ENCODE measurements at regions of chr17 and their contacts with region 1.

Region 1: DNA sequence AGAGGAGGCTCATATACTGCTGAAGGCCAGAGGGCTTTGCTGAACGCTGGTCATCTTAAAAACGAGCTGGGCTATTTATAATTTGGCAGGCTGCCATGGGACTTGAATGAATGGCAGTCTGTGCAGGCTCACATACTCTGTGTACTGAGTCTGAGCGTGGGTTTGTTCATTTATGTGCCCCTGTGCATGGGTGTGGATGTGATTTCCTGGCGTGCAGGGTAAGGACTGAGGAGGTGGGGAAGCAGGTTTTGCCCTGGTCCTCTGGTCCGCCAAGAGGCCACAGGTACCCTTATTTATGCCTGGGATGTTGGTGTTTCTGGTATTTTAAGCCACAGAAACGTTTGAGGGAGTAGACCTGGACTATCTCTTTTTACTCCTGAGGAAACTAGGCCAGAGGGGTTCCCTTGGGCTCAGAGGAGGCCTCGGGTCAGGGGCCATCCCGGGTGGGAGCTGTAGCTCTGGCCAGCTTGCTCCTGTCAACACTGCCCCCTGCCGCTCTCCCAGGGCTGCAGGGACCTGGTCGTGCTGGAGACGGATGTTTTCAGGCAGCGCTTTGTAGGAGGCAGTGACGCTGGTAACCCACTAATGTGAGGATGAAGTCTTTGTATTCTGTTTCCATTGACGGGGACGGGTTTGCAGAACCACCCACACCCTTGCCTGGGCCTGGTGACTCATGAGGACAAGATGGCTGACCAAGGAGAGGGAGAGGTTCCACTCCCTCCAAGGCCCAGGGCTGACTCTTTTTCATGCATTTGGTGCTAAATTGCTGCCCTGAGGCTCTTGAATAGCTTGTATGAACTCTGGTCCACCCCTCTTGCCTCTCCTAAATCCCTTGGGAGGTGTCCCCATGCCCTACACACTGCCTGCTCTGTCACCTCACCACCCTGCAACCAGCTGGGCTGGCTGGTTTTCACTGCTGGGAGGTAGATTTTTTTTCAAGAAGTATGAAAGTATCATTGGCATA is 184.5 kb downstream of the MSI2 start:
- DNase-seq: peak; percentile 93
- ATAC-seq: peak; percentile 86
- H3K4me3 Mint-ChIP-seq: peak overlapping the region; percentile 38
- H3K27ac Mint-ChIP-seq: peak overlapping the region; percentile 95
- H3K4me1 Mint-ChIP-seq: peaks cover 85% of the 10 kb centered on the region
- H3K27me3 Mint-ChIP-seq: no peaks in the 10 kb centered on the region

Region 2: GRCh38 chr17:56977673-56978395 is 463.0 kb before region 1 on chr17 and contains the start of gene SCPEP1:
- CTCF ChIA-PET with region 1: no interaction called
- POLR2A ChIA-PET with region 1: no interaction called
- intact Hi-C with region 1: no loop called
- DNase-seq: peak; percentile 90
- ATAC-seq: peak; percentile 96
- H3K4me3 Mint-ChIP-seq: peak within 1 kb of the TSS; percentile 83
- H3K27ac Mint-ChIP-seq: peak within 1 kb of the TSS; percentile 74
- H3K4me1 Mint-ChIP-seq: peaks cover 18% of the 10 kb centered on the region
- H3K27me3 Mint-ChIP-seq: peaks cover 3% of the 10 kb centered on the region
- total RNA-seq, gene SCPEP1: 9.7 to 14.8 TPM

Region 3: GRCh38 chr17:57084802-57085447 is 355.9 kb before region 1 on chr17 and contains the start of gene AKAP1:
- CTCF ChIA-PET with region 1: no interaction called
- POLR2A ChIA-PET with region 1: no interaction called
- intact Hi-C with region 1: loop called in 1 of 2 experiments (anchors 5 kb)
- DNase-seq: peak; percentile 97
- ATAC-seq: peak; percentile 96
- H3K4me3 Mint-ChIP-seq: peak within 1 kb of the TSS; percentile 81
- H3K27ac Mint-ChIP-seq: peak within 1 kb of the TSS; percentile 87
- H3K4me1 Mint-ChIP-seq: peaks cover 44% of the 10 kb centered on the region
- H3K27me3 Mint-ChIP-seq: no peaks in the 10 kb centered on the region
- total RNA-seq, gene AKAP1: 27.0 to 29.8 TPM

Region 4: DNA sequence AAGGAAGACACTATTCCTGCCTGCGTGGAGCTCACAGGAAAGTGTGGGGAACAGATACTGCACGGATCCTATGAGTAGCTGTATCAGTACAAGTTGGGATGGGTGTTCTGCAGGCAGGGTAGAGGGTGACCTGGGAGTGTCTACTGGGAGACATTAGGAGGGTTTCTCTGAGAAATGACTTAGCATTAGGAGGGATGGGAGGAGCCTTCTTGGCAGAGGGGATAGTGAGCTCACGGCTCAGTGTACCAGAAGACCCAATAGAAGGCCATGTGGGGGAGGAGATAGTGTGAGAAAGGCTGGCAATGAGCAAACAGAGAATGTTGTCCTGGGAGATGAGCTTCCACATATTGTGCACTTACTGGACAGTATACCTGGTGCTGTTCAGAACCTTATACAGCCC is 75.4 kb before region 1 on chr17:
- CTCF ChIA-PET with region 1: no interaction called
- POLR2A ChIA-PET with region 1: interaction called, 10 read pairs
- intact Hi-C with region 1: no loop called
- DNase-seq: no peak
- ATAC-seq: no peak
- H3K4me3 Mint-ChIP-seq: no peak overlapping the region
- H3K27ac Mint-ChIP-seq: no peak overlapping the region
- H3K4me1 Mint-ChIP-seq: peaks cover 21% of the 10 kb centered on the region
- H3K27me3 Mint-ChIP-seq: no peaks in the 10 kb centered on the region

Region 5: DNA sequence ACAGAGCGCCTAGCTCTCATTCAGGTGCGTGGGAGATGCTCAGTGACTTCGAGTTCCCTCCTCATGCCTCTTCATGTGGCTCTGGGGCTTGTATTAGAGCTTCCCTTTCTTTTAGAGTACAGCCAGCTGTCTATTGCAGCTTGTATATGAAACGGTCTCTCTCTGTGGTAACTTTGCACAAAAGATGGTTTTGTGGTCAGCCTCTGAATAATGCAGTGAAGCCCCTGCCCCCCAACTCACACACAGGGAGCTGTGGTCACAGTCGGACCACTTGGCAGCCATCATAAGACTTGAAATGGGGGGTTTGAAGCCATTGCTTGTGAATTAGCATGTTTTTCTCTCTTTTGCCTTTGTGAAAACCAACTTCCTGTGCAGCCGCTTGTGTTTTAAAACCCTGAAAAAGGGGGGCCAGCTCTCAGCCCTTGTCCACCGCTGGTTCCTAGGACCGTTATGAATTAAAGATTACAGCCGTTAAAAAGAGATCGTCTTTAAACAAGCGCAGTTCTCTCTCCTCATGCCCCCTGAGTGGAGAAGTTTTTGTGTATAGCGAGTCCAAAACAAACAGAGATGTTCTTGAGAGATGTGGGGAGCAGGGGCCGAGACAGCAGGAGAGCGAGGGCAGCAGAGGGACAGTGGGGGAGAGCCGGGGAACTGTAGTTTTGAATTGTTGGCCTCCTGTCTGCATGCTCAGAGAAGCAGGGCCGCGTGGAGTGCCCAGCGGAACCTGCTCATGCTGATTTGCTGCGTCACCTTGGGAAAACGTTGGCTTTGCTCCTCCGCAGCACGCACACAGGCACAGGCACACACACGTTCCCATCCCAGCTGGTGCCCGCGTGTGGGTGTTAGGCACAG is 14.5 kb after region 1 on chr17:
- CTCF ChIA-PET with region 1: interaction called, 18 read pairs
- POLR2A ChIA-PET with region 1: interaction called, 10 read pairs
- intact Hi-C with region 1: loop called in 1 of 2 experiments (anchors 1 kb)
- DNase-seq: peak; percentile 46
- ATAC-seq: peak; percentile 44
- H3K4me3 Mint-ChIP-seq: peak overlapping the region; percentile 38
- H3K27ac Mint-ChIP-seq: peak overlapping the region; percentile 84
- H3K4me1 Mint-ChIP-seq: peaks cover 74% of the 10 kb centered on the region
- H3K27me3 Mint-ChIP-seq: no peaks in the 10 kb centered on the region

Region 6: DNA sequence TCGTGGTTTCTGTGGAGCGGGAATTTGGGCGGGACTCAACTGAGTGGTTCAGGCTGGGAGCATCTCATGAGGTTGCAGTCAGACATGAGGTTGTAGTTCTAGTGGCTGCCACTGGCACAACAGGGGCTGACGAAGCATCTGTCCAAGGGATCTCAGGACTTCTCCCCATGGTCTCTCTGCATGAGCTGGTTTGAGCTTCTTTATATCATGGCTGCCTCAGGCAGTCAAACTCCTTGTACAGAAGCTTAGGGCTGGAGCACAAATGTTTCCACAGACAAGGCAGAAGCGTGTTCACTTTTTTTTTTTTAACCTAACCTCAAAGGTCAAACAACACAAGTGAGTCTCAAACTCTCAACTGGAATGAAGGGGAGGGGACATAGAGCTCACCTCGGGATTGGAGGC is 58.8 kb after region 1 on chr17:
- CTCF ChIA-PET with region 1: no interaction called
- POLR2A ChIA-PET with region 1: no interaction called
- intact Hi-C with region 1: loop called in 1 of 2 experiments (anchors 10 kb)
- DNase-seq: no peak
- ATAC-seq: peak; percentile 47
- H3K4me3 Mint-ChIP-seq: no peak overlapping the region
- H3K27ac Mint-ChIP-seq: peak overlapping the region; percentile 21
- H3K4me1 Mint-ChIP-seq: peaks cover 25% of the 10 kb centered on the region
- H3K27me3 Mint-ChIP-seq: no peaks in the 10 kb centered on the region

Region 7: DNA sequence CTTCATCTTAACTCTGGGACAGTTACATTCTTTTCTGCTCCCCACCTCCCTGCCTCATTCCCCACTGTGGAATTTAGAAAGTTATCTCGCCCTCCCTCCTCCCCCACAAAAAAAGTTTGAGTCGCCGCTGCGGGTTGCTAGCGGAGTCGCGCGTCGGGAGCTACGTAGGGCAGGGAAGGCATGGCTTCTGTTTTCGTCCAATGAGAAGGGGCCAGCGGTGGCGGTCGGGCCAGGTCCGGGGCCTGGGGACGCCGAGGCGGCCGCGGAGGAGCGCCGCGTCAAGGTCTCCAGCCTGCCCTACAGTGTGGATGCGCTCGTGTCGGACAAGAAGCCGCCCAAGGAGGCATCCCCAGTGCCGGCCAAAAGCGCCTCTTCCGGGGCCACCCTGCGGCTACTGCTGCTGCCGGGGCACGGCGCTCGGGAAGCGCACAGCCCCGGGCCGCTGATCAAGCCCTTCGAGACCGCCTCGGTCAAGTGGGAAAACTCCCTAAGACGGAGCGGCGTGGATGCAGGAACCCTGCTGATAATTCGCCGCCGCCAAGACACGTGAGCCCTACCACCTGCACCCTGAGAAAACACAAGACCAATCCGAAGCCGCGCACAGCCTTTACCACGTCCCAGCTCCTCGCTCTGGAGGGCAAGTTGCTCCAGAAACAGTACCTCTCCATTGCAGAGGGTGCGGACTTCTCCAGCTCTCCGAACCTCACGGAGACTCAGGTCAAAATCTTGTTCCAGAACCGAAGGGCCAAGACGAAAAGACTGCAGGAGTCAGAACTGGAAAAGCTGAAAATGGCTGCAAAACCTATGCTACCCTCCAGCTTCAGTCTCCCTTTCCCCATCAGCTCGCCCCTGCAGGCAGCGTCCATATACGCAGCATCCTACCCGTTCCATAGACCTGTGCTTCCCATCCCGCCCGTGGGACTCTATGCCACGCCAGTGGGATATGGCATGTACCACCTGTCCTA is 716.3 kb after region 1 on chr17:
- CTCF ChIA-PET with region 1: no interaction called
- POLR2A ChIA-PET with region 1: no interaction called
- intact Hi-C with region 1: loop called in 1 of 2 experiments (anchors 10 kb)
- DNase-seq: peak; percentile 78
- ATAC-seq: peak; percentile 90
- H3K4me3 Mint-ChIP-seq: peak overlapping the region; percentile 83
- H3K27ac Mint-ChIP-seq: peak overlapping the region; percentile 84
- H3K4me1 Mint-ChIP-seq: peaks cover 47% of the 10 kb centered on the region
- H3K27me3 Mint-ChIP-seq: no peaks in the 10 kb centered on the region